ENCODE measurements at regions of chr22 and their contacts with region 1.

Region 1: GRCh38 chr22:19730655-19731360 is 7.5 kb downstream of the GP1BB start:
- DNase-seq: peak; percentile 85
- H3K4me3 ChIP-seq: peak overlapping the region in 1 of 2 donors; percentile 14
- H3K27ac ChIP-seq: no peak overlapping the region
- H3K4me1 ChIP-seq: no peaks in the 10 kb centered on the region
- H3K27me3 ChIP-seq: no peaks in the 10 kb centered on the region
- CTCF ChIP-seq: peak; percentile 85 to 93 (median 91)
- POLR2A ChIP-seq: no peak

Region 2: GRCh38 chr22:19679522-19680101 is 51.2 kb before region 1 on chr22:
- intact Hi-C with region 1: no loop called
- DNase-seq: peak; percentile 55
- H3K4me3 ChIP-seq: no peak overlapping the region
- H3K27ac ChIP-seq: no peak overlapping the region
- H3K4me1 ChIP-seq: no peaks in the 10 kb centered on the region
- H3K27me3 ChIP-seq: no peaks in the 10 kb centered on the region
- CTCF ChIP-seq: peak; percentile 61 to 89 (median 67)
- POLR2A ChIP-seq: no peak

Region 3: DNA sequence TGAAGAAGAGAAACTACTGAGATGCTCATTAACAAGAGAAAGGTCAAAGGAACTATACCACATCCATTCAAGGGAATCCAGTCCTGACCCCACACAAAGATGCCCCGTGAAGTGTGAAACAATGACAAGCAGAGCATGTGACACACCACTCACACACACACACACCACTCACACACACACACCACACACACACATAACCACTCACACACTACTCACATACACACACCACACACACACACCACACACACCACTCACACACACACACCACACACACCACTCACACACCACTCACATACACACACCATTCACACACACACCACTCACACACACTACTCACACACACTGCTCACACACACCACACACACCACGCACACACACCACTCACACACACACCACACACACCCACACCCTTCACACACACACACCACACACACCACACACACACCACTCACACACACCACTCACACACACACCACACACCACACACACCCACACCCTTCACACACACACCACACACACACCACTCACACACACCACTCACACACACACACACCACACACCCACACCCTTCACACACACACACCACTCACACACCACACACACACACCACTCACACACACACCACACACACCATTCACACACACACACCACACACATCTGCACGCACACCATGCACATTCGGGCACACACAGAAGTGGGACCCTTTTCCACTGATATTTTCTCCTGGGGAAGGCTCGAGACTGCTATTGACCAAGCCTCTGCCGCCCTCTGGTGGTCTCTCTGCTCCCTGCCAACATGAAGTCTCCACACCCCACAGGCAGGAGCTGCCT is 178.8 kb after region 1 on chr22:
- intact Hi-C with region 1: loop called (anchors 5 kb)
- DNase-seq: peak; percentile 92
- H3K4me3 ChIP-seq: no peak overlapping the region
- H3K27ac ChIP-seq: no peak overlapping the region
- H3K4me1 ChIP-seq: peaks cover 1% of the 10 kb centered on the region
- H3K27me3 ChIP-seq: no peaks in the 10 kb centered on the region
- CTCF ChIP-seq: peak; percentile 76 to 87 (median 77)
- POLR2A ChIP-seq: no peak